ENCODE measurements at regions of chr2 and their contacts with region 1.

Region 1: DNA sequence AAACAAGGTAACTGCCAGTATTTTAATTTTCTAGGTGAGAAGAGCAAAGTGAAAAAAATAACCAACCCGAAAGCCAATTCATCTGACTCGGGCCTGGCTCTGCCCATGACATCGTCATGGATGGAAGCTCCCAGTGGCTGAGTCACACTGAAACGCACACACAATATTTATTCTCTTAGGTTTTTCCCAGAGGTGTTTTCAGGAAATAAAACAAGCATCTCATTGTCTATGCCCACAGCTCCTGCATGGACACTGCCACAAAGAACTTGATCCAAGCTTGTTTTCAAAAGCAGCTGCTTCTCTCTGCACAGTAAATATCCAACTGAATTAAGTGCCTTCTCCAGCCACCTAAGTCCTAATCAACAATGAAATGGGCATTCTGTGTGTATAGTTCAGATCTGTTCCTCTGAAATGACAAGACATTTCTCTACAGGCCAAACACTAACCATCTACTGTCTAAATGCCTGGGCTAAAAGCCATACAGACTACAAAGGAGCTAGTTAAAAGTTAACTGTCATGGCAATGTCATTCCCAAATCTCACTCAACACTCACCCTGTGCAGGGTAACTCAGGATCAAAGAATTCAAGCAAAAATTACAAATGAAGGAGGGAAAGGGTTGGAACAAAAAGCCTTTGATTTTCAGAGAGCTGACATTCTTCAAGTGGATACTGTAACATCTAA is 62.9 kb downstream of the RPL31 start:
- DNase-seq: no peak
- ATAC-seq: no peak
- H3K4me3 ChIP-seq: no peak overlapping the region
- H3K27ac ChIP-seq: peak overlapping the region; percentile 78 to 88 (median 83)
- H3K4me1 ChIP-seq: peaks cover 51 to 56% of the 10 kb centered on the region in 2 donors
- H3K27me3 ChIP-seq: no peaks in the 10 kb centered on the region
- CTCF ChIP-seq: no peak
- POLR2A ChIP-seq: no peak

Region 2: DNA sequence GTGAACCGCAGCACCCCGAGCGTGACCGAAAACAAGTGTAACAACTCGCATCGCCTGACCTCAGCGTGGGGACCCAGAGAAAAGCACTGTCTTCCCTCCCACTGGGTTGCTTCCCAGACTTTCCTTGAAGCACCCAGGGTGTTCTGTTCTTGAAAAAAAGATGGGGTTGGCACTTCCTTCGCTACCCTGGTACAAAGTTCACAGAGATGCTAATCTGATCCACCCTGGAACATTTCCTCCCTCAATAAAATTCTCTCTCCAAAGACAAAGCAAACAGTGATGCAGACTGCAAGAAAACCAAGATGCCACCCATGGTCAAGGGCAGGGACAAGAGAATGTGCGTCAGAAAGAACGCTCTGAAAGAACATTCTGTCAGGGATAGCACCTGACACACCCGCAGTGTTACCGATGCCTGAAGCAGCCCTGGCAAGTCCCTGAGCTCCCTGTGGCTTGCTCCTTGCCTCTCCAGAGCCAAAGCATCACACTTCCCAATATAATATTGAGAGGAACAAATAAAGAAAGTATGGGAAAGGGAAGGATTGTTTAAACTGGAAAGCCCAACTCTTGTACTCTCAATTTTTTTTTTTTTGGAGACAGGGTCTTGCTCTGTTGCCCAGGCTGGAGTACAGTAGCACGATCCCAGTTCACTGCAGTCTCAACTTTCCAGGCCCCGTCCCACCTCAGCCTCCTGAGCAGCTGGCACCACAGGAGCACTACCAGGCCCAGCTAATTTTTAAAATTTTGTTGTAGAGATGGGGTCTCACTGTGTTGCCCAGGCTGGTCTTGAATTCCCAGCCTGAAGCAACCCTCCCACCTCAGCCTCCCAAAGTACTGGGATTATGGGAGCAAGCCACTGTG is 15.4 kb after region 1 on chr2:
- in situ Hi-C with region 1: no loop called
- intact Hi-C with region 1: loop called (anchors 2 kb)
- DNase-seq: peak; percentile 88 to 94
- ATAC-seq: peak; percentile 87 to 93
- H3K4me3 ChIP-seq: no peak overlapping the region
- H3K27ac ChIP-seq: peak overlapping the region; percentile 91 to 95 (median 92)
- H3K4me1 ChIP-seq: peaks cover 57 to 66% of the 10 kb centered on the region in 2 donors
- H3K27me3 ChIP-seq: no peaks in the 10 kb centered on the region
- CTCF ChIP-seq: no peak
- POLR2A ChIP-seq: peak; percentile 33 to 42

Region 3: GRCh38 chr2:101113396-101114267 is 48.6 kb after region 1 on chr2:
- in situ Hi-C with region 1: no loop called
- intact Hi-C with region 1: loop called (anchors 2 kb)
- DNase-seq: peak in 1 of 2 donors; percentile 47
- ATAC-seq: peak; percentile 22 to 25
- H3K4me3 ChIP-seq: peak overlapping the region in 3 of 4 donors; percentile 4 to 19 (median 9)
- H3K27ac ChIP-seq: peak overlapping the region; percentile 84 to 100 (median 99)
- H3K4me1 ChIP-seq: peaks cover 78 to 96% of the 10 kb centered on the region in 2 donors
- H3K27me3 ChIP-seq: no peaks in the 10 kb centered on the region
- CTCF ChIP-seq: peak in 2 of 5 experiments; percentile 10 to 20
- POLR2A ChIP-seq: peak in 1 of 2 donors; percentile 79

Region 4: GRCh38 chr2:101120172-101120996 is 55.4 kb after region 1 on chr2:
- in situ Hi-C with region 1: no loop called
- intact Hi-C with region 1: loop called (anchors 1 kb)
- DNase-seq: peak; percentile 97 to 100
- ATAC-seq: peak; percentile 77 to 80
- H3K4me3 ChIP-seq: peak overlapping the region in 1 of 4 donors; percentile 24
- H3K27ac ChIP-seq: peak overlapping the region; percentile 90 to 100 (median 99)
- H3K4me1 ChIP-seq: peaks cover 87 to 92% of the 10 kb centered on the region in 2 donors
- H3K27me3 ChIP-seq: no peaks in the 10 kb centered on the region
- CTCF ChIP-seq: no peak
- POLR2A ChIP-seq: peak in 1 of 2 donors; percentile 59